Dendritic cell treated with granulocyte-macrophage colony-stimulating factor and Interleukin-4, amounts not matched to agents 40 ng/mL and 50 ng/mL, for 4 days (primary cell): ENCODE measurements at regions of chr7 and their contacts with region 1.

Region 1: DNA sequence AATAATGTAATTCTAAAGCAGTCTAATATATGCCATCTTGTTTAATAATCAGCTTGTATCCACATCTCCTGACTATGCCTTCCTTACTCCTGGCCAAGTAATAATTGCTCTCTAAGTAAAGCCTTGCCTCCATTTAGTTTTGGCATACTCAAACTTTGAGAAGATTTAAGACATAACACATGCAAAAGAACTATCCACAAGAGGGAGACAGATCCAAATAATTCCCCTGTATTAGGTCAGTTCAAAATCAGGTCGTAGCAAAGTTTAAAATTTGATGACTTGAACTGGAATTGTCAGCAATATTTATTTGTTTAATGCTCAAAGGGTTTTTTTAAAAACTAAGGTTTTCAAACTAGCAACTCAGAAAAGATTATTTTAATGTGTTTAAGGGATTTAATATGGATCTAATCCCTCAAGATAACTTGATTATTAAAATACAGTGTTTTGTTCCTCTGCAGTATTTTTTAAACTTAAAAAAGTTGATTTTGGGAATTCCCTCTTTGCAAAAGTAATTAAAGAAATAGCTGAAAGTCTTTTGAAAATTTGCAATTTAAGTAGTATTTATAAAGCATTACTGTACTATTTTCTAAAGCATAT is 95.3 kb downstream of the HDAC9 start:
- H3K4me3 Mint-ChIP-seq: no peak overlapping the region
- H3K27ac Mint-ChIP-seq: no peak overlapping the region
- H3K4me1 Mint-ChIP-seq: peaks cover 19% of the 10 kb centered on the region
- H3K27me3 Mint-ChIP-seq: no peaks in the 10 kb centered on the region

Region 2: DNA sequence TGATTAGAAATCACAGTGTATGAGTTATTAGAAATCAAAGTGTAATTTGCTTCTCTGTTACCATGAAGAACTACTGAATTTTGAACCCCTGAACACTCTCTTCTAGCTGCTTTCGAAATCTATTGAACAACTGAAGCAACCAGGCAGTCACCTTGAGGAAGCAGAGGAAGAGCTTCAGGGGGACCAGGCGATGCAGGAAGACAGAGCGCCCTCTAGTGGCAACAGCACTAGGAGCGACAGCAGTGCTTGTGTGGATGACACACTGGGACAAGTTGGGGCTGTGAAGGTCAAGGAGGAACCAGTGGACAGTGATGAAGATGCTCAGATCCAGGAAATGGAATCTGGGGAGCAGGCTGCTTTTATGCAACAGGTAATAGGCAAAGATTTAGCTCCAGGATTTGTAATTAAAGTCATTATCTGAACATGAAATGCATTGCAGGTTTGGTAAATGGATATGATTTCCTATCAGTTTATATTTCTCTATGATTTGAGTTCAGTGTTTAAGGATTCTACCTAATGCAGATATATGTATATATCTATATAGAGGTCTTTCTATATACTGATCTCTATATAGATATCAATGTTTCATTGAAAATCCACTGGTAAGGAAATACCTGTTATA is 75.4 kb after region 1 on chr7:
- intact Hi-C with region 1: loop called (anchors 2 kb)
- H3K4me3 Mint-ChIP-seq: no peak overlapping the region
- H3K27ac Mint-ChIP-seq: no peak overlapping the region
- H3K4me1 Mint-ChIP-seq: peaks cover 5% of the 10 kb centered on the region
- H3K27me3 Mint-ChIP-seq: no peaks in the 10 kb centered on the region

Region 3: GRCh38 chr7:19051767-19052375 is 461.0 kb after region 1 on chr7:
- intact Hi-C with region 1: loop called (anchors 5 kb)
- H3K4me3 Mint-ChIP-seq: no peak overlapping the region
- H3K27ac Mint-ChIP-seq: no peak overlapping the region
- H3K4me1 Mint-ChIP-seq: no peaks in the 10 kb centered on the region
- H3K27me3 Mint-ChIP-seq: no peaks in the 10 kb centered on the region